ENCODE measurements at regions of chr1 and their contacts with region 1.

Region 1: DNA sequence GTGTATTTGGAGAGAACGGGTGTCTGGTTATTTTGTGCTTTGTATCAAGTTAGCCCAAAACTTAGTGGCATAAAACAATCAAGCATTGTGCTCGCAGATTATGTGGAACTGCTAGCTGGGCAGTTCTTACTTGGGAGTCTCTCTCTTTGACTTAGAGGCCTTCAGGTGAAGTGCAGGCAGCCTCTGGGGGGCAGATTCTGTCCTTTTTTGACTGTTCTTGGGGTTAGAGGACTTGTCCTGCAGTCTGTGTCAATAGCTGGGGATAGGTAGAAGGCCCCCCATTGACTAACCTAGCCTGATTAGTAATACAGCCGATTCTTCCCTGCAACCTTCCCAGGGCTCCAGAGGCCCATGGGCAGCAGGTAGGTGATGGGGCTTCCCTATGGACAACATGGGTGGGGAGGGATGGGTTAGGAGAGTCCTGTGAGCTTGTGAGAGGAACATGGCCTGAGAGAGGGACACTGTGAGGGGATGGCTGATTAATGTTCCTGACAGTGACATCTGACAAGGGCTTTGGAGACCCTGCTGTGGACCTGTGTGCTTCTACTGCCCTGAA is 37.2 kb upstream of the ACOT11 start:
- DNase-seq: no peak
- H3K4me3 ChIP-seq: no peak overlapping the region
- H3K27ac ChIP-seq: no peak overlapping the region
- H3K4me1 ChIP-seq: no peaks in the 10 kb centered on the region
- H3K27me3 ChIP-seq: no peaks in the 10 kb centered on the region
- CTCF ChIP-seq: no peak

Region 2: GRCh38 chr1:54429838-54430237 is 81.0 kb before region 1 on chr1:
- CTCF ChIA-PET with region 1: no interaction called
- dilution Hi-C with region 1: loop called (anchors 5 kb)
- in situ Hi-C with region 1: no loop called
- intact Hi-C with region 1: no loop called
- DNase-seq: no peak
- H3K4me3 ChIP-seq: no peak overlapping the region
- H3K27ac ChIP-seq: no peak overlapping the region
- H3K4me1 ChIP-seq: no peaks in the 10 kb centered on the region
- H3K27me3 ChIP-seq: no peaks in the 10 kb centered on the region
- CTCF ChIP-seq: no peak

Region 3: GRCh38 chr1:54488779-54489626 is 21.8 kb before region 1 on chr1:
- CTCF ChIA-PET with region 1: no interaction called
- dilution Hi-C with region 1: no loop called
- in situ Hi-C with region 1: no loop called
- intact Hi-C with region 1: no loop called
- DNase-seq: peak; percentile 60
- H3K4me3 ChIP-seq: peak overlapping the region; percentile 52 to 79 (median 58)
- H3K27ac ChIP-seq: peak overlapping the region; percentile 72
- H3K4me1 ChIP-seq: peaks cover 26% of the 10 kb centered on the region
- H3K27me3 ChIP-seq: no peaks in the 10 kb centered on the region
- CTCF ChIP-seq: peak; percentile 44 to 90

Region 4: GRCh38 chr1:54596756-54597155 is 86.0 kb after region 1 on chr1:
- CTCF ChIA-PET with region 1: no interaction called
- dilution Hi-C with region 1: loop called (anchors 5 kb)
- in situ Hi-C with region 1: no loop called
- intact Hi-C with region 1: no loop called
- DNase-seq: no peak
- H3K4me3 ChIP-seq: no peak overlapping the region
- H3K27ac ChIP-seq: no peak overlapping the region
- H3K4me1 ChIP-seq: no peaks in the 10 kb centered on the region
- H3K27me3 ChIP-seq: no peaks in the 10 kb centered on the region
- CTCF ChIP-seq: no peak